ENCODE measurements at regions of chr20 and their contacts with region 1.

Region 1: GRCh38 chr20:31452575-31452974 is 12.1 kb downstream of the DEFB123 start:
- DNase-seq: no peak
- H3K4me3 ChIP-seq: no peak overlapping the region
- H3K27ac ChIP-seq: no peak overlapping the region
- H3K4me1 ChIP-seq: no peaks in the 10 kb centered on the region
- H3K27me3 ChIP-seq: peaks cover 0 to 14% (median 0%) of the 10 kb centered on the region in 3 donors
- CTCF ChIP-seq: no peak
- EP300 ChIP-seq: no peak
- POLR2A ChIP-seq: no peak

Region 2: DNA sequence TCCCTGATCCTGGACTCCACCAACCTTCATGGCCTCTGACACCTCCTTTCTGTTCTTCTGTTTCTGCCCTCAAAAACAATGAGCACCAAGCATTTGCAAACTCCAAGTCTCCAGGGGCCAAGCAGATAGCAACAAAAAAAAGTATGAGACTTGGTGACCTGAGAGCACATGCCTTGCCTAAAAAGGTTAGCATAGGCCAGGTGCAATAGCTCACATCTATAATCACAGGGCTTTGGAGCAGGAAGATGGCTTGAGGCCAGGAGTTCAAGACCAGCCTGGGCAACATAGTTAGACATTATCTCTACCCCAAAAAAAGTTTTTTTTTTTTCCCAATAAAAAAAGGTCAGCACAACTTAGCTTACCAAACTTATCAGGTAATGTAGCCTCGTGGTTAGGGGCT is 48.0 kb after region 1 on chr20:
- intact Hi-C with region 1: loop called (anchors 5 kb)
- DNase-seq: no peak
- H3K4me3 ChIP-seq: no peak overlapping the region
- H3K27ac ChIP-seq: no peak overlapping the region
- H3K4me1 ChIP-seq: peaks cover 0 to 18% (median 6%) of the 10 kb centered on the region in 4 donors
- H3K27me3 ChIP-seq: peaks cover 0 to 9% (median 0%) of the 10 kb centered on the region in 3 donors
- CTCF ChIP-seq: no peak
- EP300 ChIP-seq: no peak
- POLR2A ChIP-seq: no peak

Region 3: DNA sequence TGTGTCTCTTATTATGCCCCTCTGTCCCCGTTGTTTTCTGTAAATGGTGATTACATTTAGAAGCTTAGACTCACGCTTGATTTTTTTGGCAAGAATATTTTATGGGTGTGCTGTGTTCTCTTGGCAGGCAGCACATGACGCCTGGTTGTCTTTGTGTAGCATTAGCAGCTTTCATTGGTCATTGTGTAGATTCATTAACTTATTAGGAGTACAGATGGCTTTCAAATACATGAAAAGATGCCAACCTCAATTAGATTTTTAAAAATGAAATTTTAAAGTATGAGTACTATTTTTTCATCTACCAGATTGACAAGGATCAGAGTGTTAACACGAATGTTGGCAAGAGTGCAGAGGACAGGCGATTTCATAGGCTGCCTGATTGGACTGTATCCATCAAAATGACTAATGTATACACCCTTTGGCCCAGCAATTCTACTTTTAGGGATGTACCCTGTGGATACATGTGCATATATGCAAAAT is 200.4 kb after region 1 on chr20:
- intact Hi-C with region 1: no loop called
- DNase-seq: peak in 1 of 2 donors; percentile 62
- H3K4me3 ChIP-seq: no peak overlapping the region
- H3K27ac ChIP-seq: no peak overlapping the region
- H3K4me1 ChIP-seq: peaks cover 0 to 15% (median 3%) of the 10 kb centered on the region in 4 donors
- H3K27me3 ChIP-seq: no peaks in the 10 kb centered on the region
- CTCF ChIP-seq: no peak
- EP300 ChIP-seq: no peak
- POLR2A ChIP-seq: no peak